Keratinocyte (primary cell): ENCODE measurements at regions of chr10 and their contacts with region 1.

Region 1: GRCh38 chr10:12981570-12981969 is 19.9 kb downstream of the CCDC3 start:
- DNase-seq: peak; percentile 21
- H3K4me3 ChIP-seq: no peak overlapping the region
- H3K27ac ChIP-seq: no peak overlapping the region
- H3K4me1 ChIP-seq: peaks cover 9% of the 10 kb centered on the region
- H3K27me3 ChIP-seq: no peaks in the 10 kb centered on the region
- CTCF ChIP-seq: no peak

Region 2: GRCh38 chr10:12757351-12757750 is 224.2 kb before region 1 on chr10:
- dilution Hi-C with region 1: no loop called
- DNase-seq: no peak
- H3K4me3 ChIP-seq: no peak overlapping the region
- H3K27ac ChIP-seq: no peak overlapping the region
- H3K4me1 ChIP-seq: no peaks in the 10 kb centered on the region
- H3K27me3 ChIP-seq: no peaks in the 10 kb centered on the region
- CTCF ChIP-seq: no peak

Region 3: GRCh38 chr10:13074561-13075451 is 93.2 kb after region 1 on chr10:
- dilution Hi-C with region 1: loop called (anchors 10 kb)
- DNase-seq: peak; percentile 19
- H3K4me3 ChIP-seq: no peak overlapping the region
- H3K27ac ChIP-seq: no peak overlapping the region
- H3K4me1 ChIP-seq: peaks cover 7% of the 10 kb centered on the region
- H3K27me3 ChIP-seq: no peaks in the 10 kb centered on the region
- CTCF ChIP-seq: peak; percentile 85 to 94 (median 86)